HEK293 (cell line): ENCODE measurements at regions of chr13 and their contacts with region 1.

Region 1: DNA sequence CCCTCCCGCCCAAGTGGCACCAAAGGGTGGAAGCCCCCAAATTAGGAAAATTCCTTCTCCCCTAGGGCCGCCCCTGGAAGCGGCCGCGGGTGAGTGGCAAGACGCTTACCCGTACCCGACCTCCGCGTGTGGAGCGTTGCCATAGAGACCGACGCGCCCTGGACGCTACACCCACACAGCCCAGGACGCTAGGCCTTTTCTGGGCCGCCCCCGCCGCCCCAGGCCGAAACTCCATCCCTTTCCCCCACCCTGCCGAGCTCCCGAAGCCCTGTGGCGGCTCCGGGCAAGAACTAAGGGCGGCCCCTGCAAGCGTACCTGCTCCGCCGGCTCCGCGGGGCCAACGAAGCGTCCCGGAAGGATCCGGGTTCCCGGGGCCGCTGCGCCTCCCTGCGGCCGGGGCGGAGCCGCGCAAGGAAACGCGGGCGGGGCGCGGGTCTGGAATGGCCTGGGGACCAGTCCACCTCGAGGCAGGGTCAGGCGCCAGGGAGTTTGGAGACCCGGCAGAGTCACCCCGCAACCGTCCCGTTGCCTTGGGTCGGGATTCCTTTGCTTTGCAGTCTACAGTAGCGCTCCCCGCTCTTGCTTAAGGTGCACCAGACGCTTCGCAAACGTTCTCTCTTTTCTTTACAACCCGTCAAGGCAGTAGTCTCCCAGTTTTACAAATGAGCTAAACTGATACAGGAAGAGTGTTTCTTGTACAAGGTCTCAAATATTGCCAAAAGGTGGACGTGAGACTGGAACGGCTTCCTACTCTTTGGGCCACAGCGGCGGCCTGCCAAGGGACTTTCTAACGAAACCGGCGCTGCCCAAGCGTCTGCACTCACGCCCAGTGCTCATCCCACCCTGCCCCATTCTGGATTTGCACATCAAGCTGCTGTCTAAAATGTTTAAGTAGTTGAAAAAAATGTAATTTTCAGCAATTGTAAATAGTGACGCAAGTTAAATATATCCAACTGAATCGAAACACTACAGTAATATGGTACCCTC is at the start of gene NEK5:
- H3K4me3 ChIP-seq: peak within 1 kb of the TSS; percentile 70
- H3K27ac ChIP-seq: no peak within 1 kb of the TSS
- H3K4me1 ChIP-seq: no peaks in the 10 kb centered on the region
- CTCF ChIP-seq: peak; percentile 64; the same call in 1 of the 2 replicates

Region 2: DNA sequence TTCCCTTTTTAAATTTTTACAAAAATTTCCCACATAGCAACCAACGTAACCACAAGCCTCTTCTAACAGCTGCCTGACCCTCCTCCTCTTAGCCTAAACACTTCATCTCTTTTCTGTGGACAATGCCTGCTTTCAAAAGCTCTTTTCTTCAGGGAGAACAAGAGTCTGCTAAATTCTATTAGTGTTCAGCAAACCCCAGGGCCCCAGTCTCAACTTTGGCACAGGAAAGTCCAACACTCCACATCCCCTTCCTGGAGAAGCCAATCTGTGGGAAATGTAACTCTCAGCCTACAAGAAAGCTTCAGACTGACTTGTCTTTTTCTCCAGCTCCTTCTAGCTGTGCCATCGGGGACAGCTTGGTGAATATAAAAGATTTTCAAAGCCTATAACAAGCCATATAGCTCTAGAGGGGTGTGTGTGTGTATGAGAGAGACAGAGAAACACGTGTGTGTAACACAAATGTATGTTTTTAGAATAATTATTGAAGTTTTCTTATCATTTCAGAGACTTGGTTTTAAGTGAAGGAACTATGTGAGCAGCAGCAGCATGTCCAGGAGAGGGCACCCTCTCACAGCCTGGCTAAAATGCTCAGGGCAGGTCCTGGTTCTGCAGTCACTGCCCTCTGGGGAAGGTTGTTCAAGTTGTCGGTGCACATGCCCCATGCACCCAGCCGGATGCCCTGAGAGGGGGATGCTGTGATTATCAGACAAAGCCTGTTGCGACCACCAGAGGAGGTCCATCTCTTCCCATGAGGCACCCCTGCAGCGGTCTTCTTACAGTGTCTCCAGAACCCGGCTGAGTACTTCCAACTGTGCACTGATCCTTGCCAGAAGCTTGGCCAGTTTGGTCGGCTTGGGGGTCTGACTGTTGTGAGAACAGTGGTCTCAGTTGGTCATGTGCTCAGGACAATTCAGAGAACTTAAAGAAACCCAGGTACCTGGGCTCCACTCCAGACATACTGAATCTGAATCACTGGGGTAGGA is 232.8 kb before region 1 on chr13:
- CTCF ChIA-PET with region 1: interaction called, 26 read pairs
- POLR2A ChIA-PET with region 1: no interaction called
- H3K4me3 ChIP-seq: no peak overlapping the region
- H3K27ac ChIP-seq: no peak overlapping the region
- H3K4me1 ChIP-seq: no peaks in the 10 kb centered on the region
- CTCF ChIP-seq: peak; percentile 59

Region 3: DNA sequence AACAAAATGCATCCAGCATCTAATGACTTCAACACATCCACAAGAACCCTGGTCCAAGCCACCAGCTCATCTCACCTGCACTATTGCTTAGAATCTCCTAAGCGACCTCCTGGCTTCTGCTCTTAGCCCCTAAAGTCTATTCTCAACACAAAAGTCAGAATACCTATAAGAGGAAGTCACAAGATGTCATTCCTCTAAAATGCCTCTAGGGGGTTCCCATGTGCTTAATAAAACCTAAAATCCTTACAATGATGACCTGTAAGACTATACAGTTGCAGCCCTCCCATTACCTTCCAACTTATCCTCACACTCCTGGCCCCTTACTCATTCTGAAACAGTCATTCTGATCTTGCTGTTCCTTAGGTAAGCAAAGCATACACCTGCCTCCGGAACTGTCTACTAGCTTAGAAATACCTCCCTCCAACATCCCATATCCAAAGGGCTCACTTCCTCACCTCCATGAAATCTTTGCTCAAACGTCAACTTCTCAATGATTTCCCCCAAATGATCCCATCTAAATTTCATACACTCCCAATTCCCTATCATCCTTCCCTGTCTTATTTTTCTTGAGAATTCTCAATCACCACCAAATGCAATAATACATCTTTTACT is 127.8 kb before region 1 on chr13:
- CTCF ChIA-PET with region 1: interaction called, 16 read pairs
- POLR2A ChIA-PET with region 1: no interaction called
- H3K4me3 ChIP-seq: no peak overlapping the region
- H3K27ac ChIP-seq: no peak overlapping the region
- H3K4me1 ChIP-seq: peaks cover 12% of the 10 kb centered on the region
- CTCF ChIP-seq: no peak